ENCODE measurements at regions of chr6 and their contacts with region 1.

Region 1: GRCh38 chr6:27753668-27754407 is 158.4 kb downstream of the OR2B2 start:
- DNase-seq: peak; percentile 83
- H3K4me3 Mint-ChIP-seq: peak overlapping the region; percentile 90
- H3K27ac Mint-ChIP-seq: peak overlapping the region; percentile 98
- H3K4me1 Mint-ChIP-seq: peaks cover 46% of the 10 kb centered on the region
- H3K27me3 Mint-ChIP-seq: peaks cover 5% of the 10 kb centered on the region

Region 2: DNA sequence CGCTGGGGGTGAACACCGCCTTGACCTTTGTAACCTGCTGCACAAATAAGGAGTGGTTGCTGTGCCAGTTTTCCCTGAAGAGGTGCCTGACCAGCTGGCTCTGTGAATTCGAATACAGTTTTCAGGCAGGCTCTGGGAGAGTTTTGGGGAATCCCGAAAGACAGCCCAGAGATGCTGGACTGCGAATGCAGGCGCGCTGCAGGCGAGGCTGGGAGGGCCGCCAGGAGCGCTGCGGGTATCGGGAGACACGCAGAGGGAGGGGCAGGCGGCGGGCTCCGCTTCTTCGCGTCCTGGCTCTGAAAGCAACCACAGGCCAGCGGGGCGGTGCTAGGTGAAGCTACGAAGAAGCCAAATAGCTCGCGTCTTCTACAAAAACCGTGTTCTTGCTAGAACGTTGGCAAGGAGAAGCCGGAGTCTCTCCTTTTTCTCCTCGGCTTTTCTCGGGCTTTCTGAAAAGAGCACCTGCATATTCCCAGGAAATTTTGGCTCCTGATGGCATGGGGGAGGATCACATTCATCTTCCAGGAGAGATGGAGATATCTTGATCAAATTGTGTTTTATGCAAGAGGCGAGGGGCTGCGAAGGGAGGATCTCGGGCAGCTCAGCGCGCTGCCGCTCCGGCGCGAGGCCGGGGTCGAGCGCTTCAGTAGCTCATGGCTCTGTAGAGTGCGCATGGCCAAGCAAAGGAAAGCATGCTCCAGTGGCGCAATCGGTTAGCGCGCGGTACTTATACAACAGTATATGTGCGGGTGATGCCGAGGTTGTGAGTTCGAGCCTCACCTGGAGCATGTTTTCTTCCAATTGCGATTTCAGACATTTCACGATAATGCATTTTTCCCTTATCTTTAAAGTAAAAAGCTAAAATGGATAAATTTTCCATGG is 122.9 kb before region 1 on chr6:
- CTCF ChIA-PET with region 1: no interaction called
- POLR2A ChIA-PET with region 1: no interaction called
- DNase-seq: peak; percentile 14
- H3K4me3 Mint-ChIP-seq: peak overlapping the region; percentile 59
- H3K27ac Mint-ChIP-seq: no peak overlapping the region
- H3K4me1 Mint-ChIP-seq: peaks cover 14% of the 10 kb centered on the region
- H3K27me3 Mint-ChIP-seq: peaks cover 65% of the 10 kb centered on the region

Region 3: GRCh38 chr6:27687154-27688013 is 66.5 kb before region 1 on chr6:
- CTCF ChIA-PET with region 1: interaction called, 11 read pairs
- POLR2A ChIA-PET with region 1: no interaction called
- DNase-seq: peak; percentile 72
- H3K4me3 Mint-ChIP-seq: peak overlapping the region; percentile 78
- H3K27ac Mint-ChIP-seq: peak overlapping the region; percentile 84
- H3K4me1 Mint-ChIP-seq: peaks cover 19% of the 10 kb centered on the region
- H3K27me3 Mint-ChIP-seq: peaks cover 16% of the 10 kb centered on the region

Region 4: DNA sequence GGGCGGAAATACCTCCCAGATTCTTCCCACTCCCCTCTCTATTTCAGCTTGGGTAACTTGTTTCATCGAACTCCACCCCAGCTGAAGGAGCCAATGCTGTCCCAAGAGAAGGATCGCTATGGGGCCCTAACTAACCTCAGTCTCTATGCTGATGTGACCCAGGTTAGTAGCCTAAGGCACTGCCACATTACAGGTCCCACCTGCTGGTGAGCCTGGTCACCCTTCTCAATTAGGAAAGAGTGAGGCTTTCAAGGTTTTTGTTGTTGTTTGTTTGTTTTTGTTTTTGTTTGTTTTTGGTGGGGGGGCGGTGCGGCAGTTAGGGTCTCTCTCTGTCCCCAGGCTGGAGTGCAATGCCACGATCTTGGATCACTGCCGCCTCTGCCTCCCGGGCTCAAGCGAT is 10.0 kb before region 1 on chr6:
- CTCF ChIA-PET with region 1: interaction called, 19 read pairs
- POLR2A ChIA-PET with region 1: no interaction called
- DNase-seq: no peak
- H3K4me3 Mint-ChIP-seq: no peak overlapping the region
- H3K27ac Mint-ChIP-seq: no peak overlapping the region
- H3K4me1 Mint-ChIP-seq: peaks cover 9% of the 10 kb centered on the region
- H3K27me3 Mint-ChIP-seq: peaks cover 37% of the 10 kb centered on the region

Region 5: GRCh38 chr6:28569748-28570147 is 815.9 kb after region 1 on chr6:
- CTCF ChIA-PET with region 1: no interaction called
- POLR2A ChIA-PET with region 1: no interaction called
- DNase-seq: no peak
- H3K4me3 Mint-ChIP-seq: no peak overlapping the region
- H3K27ac Mint-ChIP-seq: no peak overlapping the region
- H3K4me1 Mint-ChIP-seq: no peaks in the 10 kb centered on the region
- H3K27me3 Mint-ChIP-seq: peaks cover 38% of the 10 kb centered on the region